Upper lobe of right lung (tissue), 1 donor: ENCODE measurements at regions of chr12 and their contacts with region 1.

Region 1: DNA sequence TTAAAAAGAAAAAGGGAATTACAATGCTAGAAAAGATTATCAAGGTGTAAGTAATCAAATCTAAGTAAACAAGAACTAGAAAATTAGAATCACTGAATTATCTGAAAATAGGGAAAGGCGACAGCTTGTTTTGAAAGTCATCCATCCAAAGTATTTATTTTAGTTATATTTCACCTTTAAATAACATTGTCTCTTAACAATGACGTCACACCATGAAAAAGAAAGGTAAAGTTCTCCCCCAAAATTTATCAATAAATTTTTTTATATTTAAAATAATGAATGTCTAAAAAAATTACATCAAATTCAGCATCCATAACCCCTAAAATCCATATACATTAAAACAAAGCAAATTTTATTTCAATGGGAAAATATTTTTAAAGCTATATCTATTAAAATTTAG is 223.2 kb downstream of the RERGL start:
- DNase-seq: no peak
- ATAC-seq: no peak
- H3K4me3 ChIP-seq: no peak overlapping the region
- H3K27ac ChIP-seq: no peak overlapping the region
- H3K4me1 ChIP-seq: no peaks in the 10 kb centered on the region
- H3K27me3 ChIP-seq: no peaks in the 10 kb centered on the region
- CTCF ChIP-seq: no peak

Region 2: DNA sequence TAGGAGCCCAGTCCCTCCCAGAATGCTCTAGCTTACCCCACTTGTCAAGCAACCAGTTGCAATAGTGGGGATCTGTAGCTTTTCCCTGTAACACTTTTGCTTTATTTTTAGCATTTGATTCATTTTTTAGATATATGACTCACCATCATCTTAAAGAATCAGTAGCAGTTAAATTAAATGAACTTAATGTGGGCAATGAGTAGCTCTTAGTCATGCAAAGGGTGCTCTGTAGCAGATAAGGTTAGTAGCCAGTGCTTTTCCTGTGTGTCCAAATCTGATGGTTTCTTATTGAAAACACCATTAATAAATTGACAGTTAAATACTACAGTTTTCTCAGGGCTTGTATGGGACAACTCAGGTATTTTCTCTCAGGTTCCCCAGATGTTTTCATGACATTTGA is 88.6 kb before region 1 on chr12:
- intact Hi-C with region 1: loop called (anchors 5 kb)
- DNase-seq: no peak
- ATAC-seq: no peak
- H3K4me3 ChIP-seq: no peak overlapping the region
- H3K27ac ChIP-seq: no peak overlapping the region
- H3K4me1 ChIP-seq: no peaks in the 10 kb centered on the region
- H3K27me3 ChIP-seq: no peaks in the 10 kb centered on the region
- CTCF ChIP-seq: no peak

Region 3: GRCh38 chr12:18275981-18276380 is 409.2 kb after region 1 on chr12:
- intact Hi-C with region 1: no loop called
- DNase-seq: no peak
- ATAC-seq: no peak
- H3K4me3 ChIP-seq: no peak overlapping the region
- H3K27ac ChIP-seq: no peak overlapping the region
- H3K4me1 ChIP-seq: no peaks in the 10 kb centered on the region
- H3K27me3 ChIP-seq: no peaks in the 10 kb centered on the region
- CTCF ChIP-seq: no peak